ENCODE measurements at regions of chr15 and their contacts with region 1.

Region 1: DNA sequence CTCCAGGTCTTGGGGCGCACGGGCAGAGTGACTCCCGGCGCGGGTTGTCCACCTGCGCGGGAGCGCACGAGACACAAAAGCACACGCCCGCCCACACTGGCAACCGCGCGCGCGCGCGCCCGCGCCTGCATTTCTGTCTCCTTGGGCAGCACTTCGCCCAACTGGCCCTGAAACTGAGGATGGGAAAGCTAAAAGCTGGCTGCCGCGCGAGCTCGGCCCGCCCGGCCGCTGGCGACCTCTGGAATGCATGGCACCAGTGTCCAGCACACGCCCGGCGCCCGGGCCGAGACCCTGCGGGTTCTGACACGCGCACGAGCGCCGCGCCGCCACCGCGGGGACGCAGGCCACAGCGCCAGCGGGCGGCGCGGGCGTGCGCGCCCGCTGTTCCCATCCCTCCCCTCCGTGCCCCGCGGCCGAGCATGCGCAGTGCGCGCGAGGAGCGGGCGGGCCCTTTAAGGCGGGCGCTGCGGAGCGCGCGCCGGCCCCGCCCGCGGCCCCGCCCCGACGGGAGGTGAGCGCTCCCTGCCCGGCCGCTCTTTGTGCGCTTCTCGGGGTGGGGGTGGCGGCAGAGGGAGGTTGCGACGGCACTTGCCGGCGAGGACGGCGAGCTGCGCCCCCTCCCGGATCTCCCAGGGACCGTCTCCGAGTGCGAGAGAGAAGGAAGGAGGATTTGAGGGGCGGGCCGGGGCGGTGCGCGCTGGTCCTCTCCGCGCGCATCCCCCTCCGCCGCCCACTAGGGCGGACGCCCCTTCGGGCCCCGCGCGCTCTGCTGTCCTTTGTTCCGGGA is 1.0 kb upstream of the MEX3B start:
- DNase-seq: peak; percentile 94
- H3K4me3 ChIP-seq: peak overlapping the region; percentile 65 to 97 (median 92)
- H3K27ac ChIP-seq: peak overlapping the region; percentile 89 to 99 (median 96)
- H3K4me1 ChIP-seq: peaks cover 20 to 37% (median 29%) of the 10 kb centered on the region in 4 donors
- H3K27me3 ChIP-seq: no peaks in the 10 kb centered on the region
- CTCF ChIP-seq: peak; percentile 75 to 81 (median 76)
- EP300 ChIP-seq: no peak
- POLR2A ChIP-seq: peak; percentile 48

Region 2: DNA sequence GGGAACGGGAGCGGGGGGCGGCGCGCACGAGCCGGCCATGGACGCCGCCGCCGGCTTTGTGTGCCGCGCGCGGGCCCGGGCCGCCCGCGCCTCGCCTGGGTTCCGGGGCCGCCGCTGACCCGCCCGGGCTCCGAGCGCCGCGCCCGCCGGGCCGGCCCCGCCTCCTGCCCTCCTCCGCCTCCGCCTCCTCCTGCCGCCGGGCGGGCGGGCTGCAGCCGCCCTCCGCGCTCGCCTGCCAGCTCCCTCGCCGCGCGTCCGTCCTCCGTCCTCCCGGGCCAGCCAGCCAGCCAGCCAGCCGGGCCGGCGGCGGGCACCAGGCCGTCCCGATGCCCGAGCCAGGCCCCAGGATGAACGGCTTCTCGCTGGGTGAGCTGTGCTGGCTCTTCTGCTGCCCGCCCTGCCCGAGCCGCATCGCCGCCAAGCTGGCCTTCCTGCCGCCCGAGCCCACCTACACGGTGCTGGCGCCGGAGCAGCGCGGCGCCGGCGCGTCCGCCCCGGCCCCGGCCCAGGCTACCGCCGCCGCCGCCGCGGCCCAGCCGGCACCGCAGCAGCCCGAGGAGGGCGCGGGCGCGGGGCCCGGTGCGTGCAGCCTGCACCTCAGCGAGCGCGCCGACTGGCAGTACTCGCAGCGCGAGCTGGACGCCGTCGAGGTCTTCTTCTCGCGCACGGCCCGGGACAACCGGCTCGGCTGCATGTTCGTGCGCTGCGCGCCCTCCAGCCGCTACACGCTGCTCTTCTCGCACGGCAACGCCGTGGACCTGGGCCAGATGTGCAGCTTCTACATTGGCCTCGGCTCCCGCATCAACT is 1351.6 kb before region 1 on chr15 and contains the start of gene ABHD17C:
- intact Hi-C with region 1: loop called (anchors 10 kb)
- DNase-seq: no peak
- H3K4me3 ChIP-seq: peak within 1 kb of the TSS; percentile 73 to 92 (median 84)
- H3K27ac ChIP-seq: peak within 1 kb of the TSS; percentile 86 to 92 (median 89)
- H3K4me1 ChIP-seq: peaks cover 14 to 36% (median 28%) of the 10 kb centered on the region in 4 donors
- H3K27me3 ChIP-seq: no peaks in the 10 kb centered on the region
- CTCF ChIP-seq: no peak
- EP300 ChIP-seq: no peak
- POLR2A ChIP-seq: no peak
- total RNA-seq, gene ABHD17C: 1.5 to 7.1 (median 3.5) TPM

Region 3: GRCh38 chr15:80989518-80990478 is 1057.1 kb before region 1 on chr15 and contains the start of gene MESD:
- intact Hi-C with region 1: loop called (anchors 10 kb)
- DNase-seq: peak; percentile 100
- H3K4me3 ChIP-seq: peak within 1 kb of the TSS; percentile 83 to 86 (median 84)
- H3K27ac ChIP-seq: peak within 1 kb of the TSS; percentile 87 to 89 (median 89)
- H3K4me1 ChIP-seq: peaks cover 50 to 59% (median 56%) of the 10 kb centered on the region in 4 donors
- H3K27me3 ChIP-seq: no peaks in the 10 kb centered on the region
- CTCF ChIP-seq: no peak
- EP300 ChIP-seq: no peak
- POLR2A ChIP-seq: peak; percentile 85
- total RNA-seq, gene MESD: 14.1 to 17.4 (median 14.5) TPM

Region 4: DNA sequence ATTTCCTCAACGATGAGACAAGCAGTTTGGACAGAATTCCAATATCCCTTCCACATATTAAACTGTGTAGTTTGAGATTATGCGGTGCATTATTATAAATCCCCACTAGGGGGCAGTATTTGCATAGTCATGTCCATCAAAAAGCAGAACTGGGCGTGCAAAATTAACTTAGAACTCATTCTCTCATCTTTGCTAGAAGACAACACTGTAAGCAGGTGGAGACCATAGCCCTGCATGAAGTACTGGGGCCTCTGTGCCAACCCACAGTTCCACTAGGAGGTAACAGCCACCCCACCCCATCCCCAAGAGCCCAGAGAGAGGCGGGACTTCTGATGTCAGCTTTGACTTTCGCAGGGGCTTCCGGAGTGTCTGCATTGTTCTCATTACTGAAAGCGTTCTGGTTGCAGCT is 566.2 kb before region 1 on chr15:
- intact Hi-C with region 1: loop called (anchors 5 kb)
- DNase-seq: no peak
- H3K4me3 ChIP-seq: no peak overlapping the region
- H3K27ac ChIP-seq: no peak overlapping the region
- H3K4me1 ChIP-seq: peaks cover 0 to 4% (median 1%) of the 10 kb centered on the region in 4 donors
- H3K27me3 ChIP-seq: no peaks in the 10 kb centered on the region
- CTCF ChIP-seq: peak; percentile 82 to 93 (median 86)
- EP300 ChIP-seq: no peak
- POLR2A ChIP-seq: no peak

Region 5: GRCh38 chr15:81887912-81888311 is 158.9 kb before region 1 on chr15:
- intact Hi-C with region 1: loop called (anchors 10 kb)
- DNase-seq: peak; percentile 85
- H3K4me3 ChIP-seq: no peak overlapping the region
- H3K27ac ChIP-seq: no peak overlapping the region
- H3K4me1 ChIP-seq: peaks cover 0 to 17% (median 5%) of the 10 kb centered on the region in 4 donors
- H3K27me3 ChIP-seq: no peaks in the 10 kb centered on the region
- CTCF ChIP-seq: no peak
- EP300 ChIP-seq: no peak
- POLR2A ChIP-seq: no peak

Region 6: DNA sequence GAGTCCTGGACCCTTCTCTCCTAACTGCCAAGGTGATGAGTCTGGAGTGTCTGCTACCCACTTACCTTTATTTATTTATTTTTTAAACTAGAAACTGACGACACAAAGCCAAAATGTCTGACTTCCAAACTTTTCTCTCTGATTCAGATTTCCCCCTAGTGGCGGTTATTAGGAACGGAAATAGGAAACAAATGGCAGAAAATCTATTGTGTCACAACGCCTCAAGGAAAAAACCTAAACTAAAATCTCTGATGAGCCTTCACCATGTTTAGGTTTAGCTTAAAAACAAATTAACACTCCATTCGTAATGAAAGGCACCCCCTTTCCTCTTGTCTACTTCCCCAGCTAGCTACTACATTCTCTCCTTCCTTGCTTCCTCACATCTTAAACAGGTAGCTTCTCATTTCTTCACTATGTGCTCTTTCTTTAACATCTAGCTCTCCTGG is 93.0 kb after region 1 on chr15:
- intact Hi-C with region 1: loop called (anchors 2 kb)
- DNase-seq: no peak
- H3K4me3 ChIP-seq: no peak overlapping the region
- H3K27ac ChIP-seq: no peak overlapping the region
- H3K4me1 ChIP-seq: peaks cover 0 to 10% (median 9%) of the 10 kb centered on the region in 4 donors
- H3K27me3 ChIP-seq: no peaks in the 10 kb centered on the region
- CTCF ChIP-seq: peak; percentile 69 to 79 (median 71)
- EP300 ChIP-seq: no peak
- POLR2A ChIP-seq: no peak